ENCODE measurements at regions of chr14 and their contacts with region 1.

Region 1: GRCh38 chr14:71855399-71856036 is 76.7 kb upstream of the RGS6 start:
- DNase-seq: peak; percentile 67
- H3K4me3 ChIP-seq: no peak overlapping the region
- H3K27ac ChIP-seq: no peak overlapping the region
- H3K4me1 ChIP-seq: peaks cover 3% of the 10 kb centered on the region
- H3K27me3 ChIP-seq: peaks cover 0 to 2% of the 10 kb centered on the region in 2 experiments
- CTCF ChIP-seq: peak; percentile 73 to 78
- POLR2A ChIP-seq: no peak

Region 2: DNA sequence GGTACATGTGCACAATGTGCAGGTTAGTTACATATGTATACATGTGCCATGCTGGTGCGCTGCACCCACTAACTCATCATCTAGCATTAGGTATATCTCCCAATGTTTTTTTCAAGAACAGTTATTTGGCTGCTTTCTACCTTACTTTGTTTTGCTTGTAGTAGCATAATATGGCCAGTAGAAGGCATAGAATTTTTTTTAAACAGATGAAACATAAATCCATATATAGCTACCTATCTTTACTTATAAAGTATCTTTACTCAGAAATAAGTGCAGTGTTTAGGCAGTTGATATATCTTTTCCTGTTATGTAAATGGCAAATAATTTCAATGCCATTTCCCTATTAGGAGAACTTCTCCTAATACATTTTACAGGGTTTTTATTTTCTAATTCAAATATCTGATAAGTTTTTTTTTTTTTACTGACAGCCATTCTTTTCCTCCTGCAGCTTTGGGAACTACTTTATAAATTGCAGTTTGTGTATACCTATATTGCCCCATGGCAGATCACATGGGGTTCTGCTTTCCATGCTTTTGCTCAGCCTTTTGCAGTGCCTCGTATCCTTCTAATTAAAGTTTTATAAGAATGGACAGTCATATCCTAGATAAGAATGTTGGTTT is 805.2 kb before region 1 on chr14:
- CTCF ChIA-PET with region 1: interaction called, 22 read pairs
- POLR2A ChIA-PET with region 1: no interaction called
- dilution Hi-C with region 1: no loop called
- intact Hi-C with region 1: no loop called
- DNase-seq: peak; percentile 28
- H3K4me3 ChIP-seq: no peak overlapping the region
- H3K27ac ChIP-seq: no peak overlapping the region
- H3K4me1 ChIP-seq: no peaks in the 10 kb centered on the region
- H3K27me3 ChIP-seq: no peaks in the 10 kb centered on the region
- CTCF ChIP-seq: peak in 1 of 2 donors; percentile 17
- POLR2A ChIP-seq: no peak

Region 3: DNA sequence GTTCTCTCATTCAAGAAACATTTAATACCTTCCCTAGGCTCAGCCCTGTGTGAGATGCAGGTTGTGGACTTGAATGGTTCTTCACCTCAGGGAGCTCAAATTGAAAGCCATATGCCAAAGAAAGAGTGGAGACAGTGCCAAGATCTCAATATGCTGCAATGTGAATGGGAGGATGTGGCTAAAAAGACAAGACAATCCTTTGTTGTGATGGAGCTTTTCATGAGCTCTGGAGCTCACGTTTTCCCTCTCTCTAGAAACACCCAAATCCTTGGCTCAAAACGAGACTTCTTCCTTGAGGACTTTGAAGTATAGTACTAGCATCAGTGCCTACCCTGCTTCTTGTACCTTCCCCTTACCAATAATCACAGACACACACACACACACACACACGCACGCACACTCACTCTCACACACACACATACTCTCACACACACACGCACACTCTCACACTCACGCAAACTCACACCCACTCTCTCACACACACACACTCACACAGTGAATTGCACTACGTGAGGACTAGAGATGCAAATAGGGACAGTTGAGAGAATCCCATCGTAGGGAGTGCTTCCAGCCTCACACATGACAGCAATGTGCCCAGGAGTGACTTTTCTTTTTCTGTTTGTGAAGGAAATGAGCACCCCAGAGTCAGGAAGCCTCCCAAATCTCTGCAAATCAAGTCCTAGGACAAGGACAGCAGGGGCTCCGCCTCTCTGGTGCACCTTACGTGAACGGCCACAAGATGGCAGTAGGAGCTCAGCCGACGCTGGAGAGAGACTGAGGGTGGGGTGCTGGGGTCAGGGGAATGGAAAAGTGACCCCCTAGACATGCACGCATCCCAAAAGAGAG is 716.8 kb before region 1 on chr14:
- CTCF ChIA-PET with region 1: interaction called, 59 read pairs
- POLR2A ChIA-PET with region 1: no interaction called
- dilution Hi-C with region 1: no loop called
- intact Hi-C with region 1: no loop called
- DNase-seq: peak; percentile 46
- H3K4me3 ChIP-seq: no peak overlapping the region
- H3K27ac ChIP-seq: no peak overlapping the region
- H3K4me1 ChIP-seq: peaks cover 15% of the 10 kb centered on the region
- H3K27me3 ChIP-seq: no peaks in the 10 kb centered on the region
- CTCF ChIP-seq: peak; percentile 85 to 90
- POLR2A ChIP-seq: no peak

Region 4: GRCh38 chr14:71711619-71712018 is 143.9 kb before region 1 on chr14:
- CTCF ChIA-PET with region 1: interaction called, 14 read pairs
- POLR2A ChIA-PET with region 1: no interaction called
- dilution Hi-C with region 1: no loop called
- intact Hi-C with region 1: no loop called
- DNase-seq: peak; percentile 79
- H3K4me3 ChIP-seq: no peak overlapping the region
- H3K27ac ChIP-seq: no peak overlapping the region
- H3K4me1 ChIP-seq: no peaks in the 10 kb centered on the region
- H3K27me3 ChIP-seq: no peaks in the 10 kb centered on the region
- CTCF ChIP-seq: no peak
- POLR2A ChIP-seq: no peak

Region 5: DNA sequence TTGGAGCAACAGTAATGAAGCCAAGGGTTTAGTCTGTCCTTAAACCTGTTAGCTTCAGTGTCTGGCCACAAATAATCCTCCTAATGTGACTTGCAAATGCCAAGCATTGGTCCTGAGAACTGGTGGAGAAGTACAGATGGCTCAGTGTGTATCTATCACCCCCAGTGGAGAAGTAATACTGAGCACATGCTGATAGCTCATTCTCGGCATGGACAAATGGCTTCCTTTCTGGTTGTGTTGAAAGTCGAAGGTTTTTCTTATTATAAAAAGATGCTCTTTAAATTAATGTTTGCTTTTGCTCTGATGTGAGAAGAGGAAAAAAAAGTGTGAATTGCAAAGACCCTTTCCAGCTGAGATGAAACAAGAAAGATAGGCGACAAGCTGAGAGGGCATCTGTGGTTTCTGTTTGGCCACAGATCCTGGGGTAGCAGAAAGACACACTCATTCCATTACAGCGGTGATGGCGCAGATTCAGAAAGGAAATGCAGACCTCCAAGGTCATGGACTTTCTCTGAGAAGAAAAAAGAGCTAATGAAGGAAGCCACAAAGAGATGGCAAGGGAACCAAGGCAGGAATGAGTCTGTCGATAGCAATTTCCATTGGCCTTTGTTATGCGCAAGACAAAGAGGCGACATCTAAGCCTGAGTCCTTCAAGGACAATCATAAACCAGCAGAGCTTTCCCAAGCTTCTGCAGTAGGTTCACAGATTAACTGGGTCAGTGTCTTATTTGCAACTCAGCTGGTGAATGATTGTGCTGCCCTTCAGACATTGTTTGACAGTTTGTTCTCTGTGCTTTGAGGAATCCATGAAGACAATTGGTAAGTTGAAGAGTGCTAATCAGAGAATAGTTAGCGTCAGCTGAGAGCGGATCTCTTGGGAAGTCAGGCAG is 78.8 kb before region 1 on chr14:
- CTCF ChIA-PET with region 1: interaction called, 16 read pairs
- POLR2A ChIA-PET with region 1: no interaction called
- dilution Hi-C with region 1: no loop called
- intact Hi-C with region 1: no loop called
- DNase-seq: peak; percentile 64
- H3K4me3 ChIP-seq: no peak overlapping the region
- H3K27ac ChIP-seq: no peak overlapping the region
- H3K4me1 ChIP-seq: peaks cover 20% of the 10 kb centered on the region
- H3K27me3 ChIP-seq: peaks cover 0 to 2% of the 10 kb centered on the region in 2 experiments
- CTCF ChIP-seq: no peak
- POLR2A ChIP-seq: no peak

Region 6: GRCh38 chr14:71891970-71892369 is 36.5 kb after region 1 on chr14:
- CTCF ChIA-PET with region 1: no interaction called
- POLR2A ChIA-PET with region 1: no interaction called
- dilution Hi-C with region 1: no loop called
- intact Hi-C with region 1: no loop called
- DNase-seq: no peak
- H3K4me3 ChIP-seq: no peak overlapping the region
- H3K27ac ChIP-seq: no peak overlapping the region
- H3K4me1 ChIP-seq: no peaks in the 10 kb centered on the region
- H3K27me3 ChIP-seq: no peaks in the 10 kb centered on the region
- CTCF ChIP-seq: no peak
- POLR2A ChIP-seq: no peak

Region 7: DNA sequence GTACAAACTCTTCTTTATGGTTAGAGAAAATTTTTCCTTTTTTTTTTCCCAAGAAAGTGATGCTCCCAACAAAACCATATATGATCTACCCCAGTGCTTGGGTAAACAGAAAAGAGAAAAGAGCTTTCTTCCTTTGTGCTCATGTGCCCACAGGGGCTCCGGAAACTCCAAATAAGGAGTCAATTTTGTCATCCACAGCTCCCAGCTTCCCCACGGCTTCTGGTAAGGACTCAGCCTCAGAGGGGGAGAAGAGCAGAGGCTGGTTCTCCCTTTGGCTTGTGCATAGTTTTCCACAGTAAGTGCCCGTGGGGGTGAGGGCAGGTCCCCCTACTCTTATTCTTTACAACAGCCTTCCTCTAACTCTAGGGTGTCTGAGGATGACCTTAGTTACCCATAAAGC is 63.4 kb after region 1 on chr14:
- CTCF ChIA-PET with region 1: no interaction called
- POLR2A ChIA-PET with region 1: no interaction called
- dilution Hi-C with region 1: no loop called
- intact Hi-C with region 1: no loop called
- DNase-seq: no peak
- H3K4me3 ChIP-seq: no peak overlapping the region
- H3K27ac ChIP-seq: no peak overlapping the region
- H3K4me1 ChIP-seq: no peaks in the 10 kb centered on the region
- H3K27me3 ChIP-seq: no peaks in the 10 kb centered on the region
- CTCF ChIP-seq: no peak
- POLR2A ChIP-seq: no peak